Activated naive CD4-positive, alpha-beta T cell treated with anti-CD3 and anti-CD28 coated beads for 36 hours (primary cell): ENCODE measurements at regions of chr20 and their contacts with region 1.

Region 1: DNA sequence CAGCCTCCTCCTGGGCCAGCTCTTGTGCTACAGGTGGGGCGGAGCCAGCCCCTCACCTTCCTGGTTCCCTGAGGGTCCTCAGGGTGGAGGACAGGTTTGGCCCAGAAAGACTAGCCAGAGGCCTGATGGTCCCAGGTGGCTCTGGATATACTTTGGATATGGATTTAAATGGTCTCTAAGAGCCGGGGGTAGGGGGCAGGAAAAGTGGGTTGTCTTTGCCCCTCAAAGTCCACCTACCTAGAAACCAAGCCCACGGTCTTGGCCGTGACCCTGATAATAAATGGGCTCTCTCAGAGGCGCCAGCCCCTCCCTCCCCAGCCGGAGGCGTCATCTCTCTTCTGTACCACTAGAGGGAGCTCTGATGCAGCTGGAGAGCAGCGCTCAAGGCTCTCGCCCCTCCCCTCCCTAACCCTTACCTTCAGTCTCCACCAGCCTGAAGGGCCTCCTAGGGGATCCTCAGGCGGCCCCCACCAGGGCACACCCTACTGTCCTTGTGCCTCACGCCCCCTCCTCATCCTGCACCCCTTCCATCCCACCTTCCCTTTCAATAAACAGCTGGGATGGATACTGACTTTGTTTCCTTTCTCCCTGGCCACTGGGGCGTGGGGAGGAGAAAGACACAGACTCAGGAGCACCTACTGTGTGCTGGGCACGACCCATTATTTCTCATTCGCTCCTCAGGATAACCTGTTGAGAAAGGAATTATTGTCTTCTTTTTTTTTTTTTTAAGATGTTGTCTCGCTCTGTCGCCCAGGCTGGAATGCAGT is 7.6 kb downstream of the NRSN2 start:
- DNase-seq: peak; percentile 85
- H3K4me3 Mint-ChIP-seq: no peak overlapping the region
- H3K27ac Mint-ChIP-seq: no peak overlapping the region
- H3K4me1 Mint-ChIP-seq: peaks cover 4% of the 10 kb centered on the region
- H3K27me3 Mint-ChIP-seq: no peaks in the 10 kb centered on the region

Region 2: DNA sequence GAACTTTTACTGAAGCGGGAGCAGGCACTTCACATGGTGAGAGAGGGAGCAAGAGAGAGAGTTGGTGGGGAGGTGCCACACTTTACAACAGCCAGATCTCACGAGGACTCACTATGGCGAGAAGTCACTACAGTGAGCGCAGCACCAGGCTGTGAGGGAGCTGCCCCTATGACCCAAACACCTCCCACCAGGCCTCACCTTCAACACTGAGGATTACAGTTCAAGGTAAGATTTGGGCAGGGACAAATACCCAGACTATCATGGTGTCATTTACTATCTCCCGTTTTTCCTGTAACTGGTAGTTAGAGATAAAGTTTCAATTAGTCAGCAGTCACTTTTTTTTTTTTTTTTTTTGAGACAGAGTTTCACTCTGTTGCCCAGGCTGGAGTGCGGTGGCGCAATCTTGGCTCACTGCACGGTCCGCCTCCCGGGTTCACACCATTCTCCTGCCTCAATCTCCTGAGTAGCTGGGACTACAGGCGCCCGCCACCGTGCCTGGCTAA is 61.4 kb after region 1 on chr20:
- CTCF ChIA-PET with region 1: no interaction called
- intact Hi-C with region 1: no loop called
- DNase-seq: no peak
- H3K4me3 Mint-ChIP-seq: no peak overlapping the region
- H3K27ac Mint-ChIP-seq: peak overlapping the region; percentile 31
- H3K4me1 Mint-ChIP-seq: peaks cover 49% of the 10 kb centered on the region
- H3K27me3 Mint-ChIP-seq: no peaks in the 10 kb centered on the region

Region 3: GRCh38 chr20:431012-431904 is 76.8 kb after region 1 on chr20:
- CTCF ChIA-PET with region 1: interaction called, 15 read pairs
- intact Hi-C with region 1: loop called (anchors 1 kb)
- DNase-seq: peak; percentile 75
- H3K4me3 Mint-ChIP-seq: no peak overlapping the region
- H3K27ac Mint-ChIP-seq: peak overlapping the region; percentile 89
- H3K4me1 Mint-ChIP-seq: peaks cover 57% of the 10 kb centered on the region
- H3K27me3 Mint-ChIP-seq: no peaks in the 10 kb centered on the region

Region 4: GRCh38 chr20:478949-479429 is 124.5 kb after region 1 on chr20:
- CTCF ChIA-PET with region 1: interaction called, 40 read pairs
- intact Hi-C with region 1: loop called (anchors 1 kb)
- DNase-seq: peak; percentile 41
- H3K4me3 Mint-ChIP-seq: no peak overlapping the region
- H3K27ac Mint-ChIP-seq: no peak overlapping the region
- H3K4me1 Mint-ChIP-seq: peaks cover 22% of the 10 kb centered on the region
- H3K27me3 Mint-ChIP-seq: no peaks in the 10 kb centered on the region

Region 5: DNA sequence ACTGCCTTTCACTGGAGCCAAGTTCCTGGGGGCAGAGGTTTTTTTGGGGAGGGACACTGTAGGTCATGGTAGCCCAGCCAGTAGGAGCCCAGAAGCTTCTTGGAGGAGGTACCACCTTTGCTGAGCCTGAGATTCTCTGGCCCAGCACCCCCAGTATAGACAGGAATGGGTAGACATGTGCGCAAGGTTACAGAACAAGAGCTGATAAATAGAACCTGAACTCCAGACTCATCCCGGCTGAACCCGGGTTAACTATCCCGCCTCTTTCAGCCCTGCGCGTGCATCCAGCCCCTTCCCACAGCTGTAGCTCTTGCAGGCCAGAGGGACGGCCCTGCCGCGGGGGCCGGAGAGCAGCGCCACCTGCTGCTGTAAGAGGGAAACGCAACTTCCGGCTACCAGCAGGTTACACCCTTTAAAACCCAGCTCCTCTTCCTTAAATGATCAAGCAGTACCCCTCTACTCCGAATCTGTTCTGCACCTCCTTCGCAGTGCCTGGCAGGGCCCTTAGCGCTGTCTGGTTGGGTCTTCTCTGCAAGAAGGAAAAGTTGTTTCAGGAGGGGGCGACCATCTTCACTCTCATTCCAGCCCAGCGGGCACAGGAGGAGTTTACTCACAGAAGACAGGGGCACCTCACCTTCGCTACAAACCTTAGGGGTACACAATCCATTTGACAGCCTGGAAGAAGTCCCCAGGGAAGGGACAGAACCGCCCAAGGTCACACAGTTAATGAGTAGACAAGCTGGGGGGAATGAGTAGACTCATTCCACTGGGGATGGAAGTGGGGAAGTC is 291.0 kb after region 1 on chr20:
- CTCF ChIA-PET with region 1: interaction called, 11 read pairs
- intact Hi-C with region 1: loop called (anchors 1 kb)
- DNase-seq: peak; percentile 76
- H3K4me3 Mint-ChIP-seq: no peak overlapping the region
- H3K27ac Mint-ChIP-seq: no peak overlapping the region
- H3K4me1 Mint-ChIP-seq: peaks cover 9% of the 10 kb centered on the region
- H3K27me3 Mint-ChIP-seq: peaks cover 21% of the 10 kb centered on the region

Region 6: GRCh38 chr20:728248-728944 is 373.9 kb after region 1 on chr20:
- CTCF ChIA-PET with region 1: interaction called, 3 read pairs
- intact Hi-C with region 1: loop called (anchors 5 kb)
- DNase-seq: peak; percentile 69
- H3K4me3 Mint-ChIP-seq: no peak overlapping the region
- H3K27ac Mint-ChIP-seq: no peak overlapping the region
- H3K4me1 Mint-ChIP-seq: no peaks in the 10 kb centered on the region
- H3K27me3 Mint-ChIP-seq: peaks cover 40% of the 10 kb centered on the region